Activated naive CD8-positive, alpha-beta T cell treated with anti-CD3 and anti-CD28 coated beads, Interleukin-2, amount 10 ng/mL, durations not matched to agents 7 days and 5 days (primary cell): ENCODE measurements at regions of chr10 and their contacts with region 1.

Region 1: DNA sequence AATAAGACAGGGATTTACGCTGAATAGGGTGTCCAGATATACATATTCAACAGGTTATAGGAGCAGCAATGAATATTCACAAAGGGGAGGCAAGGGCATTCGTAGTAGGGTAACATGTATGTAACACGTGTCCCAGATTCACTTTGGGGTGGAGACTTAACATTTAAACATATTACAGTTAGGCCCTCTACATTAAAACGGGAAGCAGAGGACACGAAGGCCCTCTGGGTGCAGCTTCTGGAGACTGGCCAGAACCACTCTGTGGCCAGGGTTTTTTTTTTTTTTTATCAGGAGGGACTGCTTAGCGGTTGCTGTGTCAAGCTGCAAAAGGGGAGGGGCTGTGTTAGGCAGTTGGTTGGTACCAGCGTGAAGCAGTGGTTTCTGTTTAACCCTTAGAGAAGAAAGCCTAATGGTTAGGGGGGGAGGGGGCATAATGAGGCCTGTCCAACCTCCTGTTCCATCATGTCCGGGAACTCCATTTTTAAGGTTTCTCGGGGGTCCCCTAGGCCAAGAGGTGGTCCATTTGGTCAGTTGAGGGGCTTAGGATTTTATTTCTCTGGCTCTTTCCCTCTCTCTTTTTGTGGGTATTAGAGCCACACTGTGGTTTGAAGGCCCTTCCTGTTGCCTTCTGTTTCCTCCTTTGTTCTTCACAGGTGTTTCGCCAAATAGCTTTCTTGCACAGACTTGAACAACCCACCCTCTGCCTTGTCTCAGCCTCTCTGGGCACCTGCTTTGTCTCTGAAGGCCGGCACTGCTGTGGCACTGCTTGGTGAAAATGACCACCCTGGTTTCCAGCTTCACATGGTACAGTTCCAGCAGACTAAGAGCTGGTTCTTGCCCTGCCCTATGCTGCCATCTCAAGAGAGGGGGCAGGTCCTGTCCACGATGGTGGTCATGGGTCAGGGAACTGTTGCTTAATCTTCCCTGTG is 26.4 kb downstream of the PRF1 start:
- DNase-seq: no peak
- ATAC-seq: peak; percentile 8
- H3K4me3 Mint-ChIP-seq: peak overlapping the region; percentile 69
- H3K27ac Mint-ChIP-seq: peak overlapping the region; percentile 74
- H3K4me1 Mint-ChIP-seq: peaks cover 60% of the 10 kb centered on the region
- H3K27me3 Mint-ChIP-seq: peaks cover 5% of the 10 kb centered on the region

Region 2: DNA sequence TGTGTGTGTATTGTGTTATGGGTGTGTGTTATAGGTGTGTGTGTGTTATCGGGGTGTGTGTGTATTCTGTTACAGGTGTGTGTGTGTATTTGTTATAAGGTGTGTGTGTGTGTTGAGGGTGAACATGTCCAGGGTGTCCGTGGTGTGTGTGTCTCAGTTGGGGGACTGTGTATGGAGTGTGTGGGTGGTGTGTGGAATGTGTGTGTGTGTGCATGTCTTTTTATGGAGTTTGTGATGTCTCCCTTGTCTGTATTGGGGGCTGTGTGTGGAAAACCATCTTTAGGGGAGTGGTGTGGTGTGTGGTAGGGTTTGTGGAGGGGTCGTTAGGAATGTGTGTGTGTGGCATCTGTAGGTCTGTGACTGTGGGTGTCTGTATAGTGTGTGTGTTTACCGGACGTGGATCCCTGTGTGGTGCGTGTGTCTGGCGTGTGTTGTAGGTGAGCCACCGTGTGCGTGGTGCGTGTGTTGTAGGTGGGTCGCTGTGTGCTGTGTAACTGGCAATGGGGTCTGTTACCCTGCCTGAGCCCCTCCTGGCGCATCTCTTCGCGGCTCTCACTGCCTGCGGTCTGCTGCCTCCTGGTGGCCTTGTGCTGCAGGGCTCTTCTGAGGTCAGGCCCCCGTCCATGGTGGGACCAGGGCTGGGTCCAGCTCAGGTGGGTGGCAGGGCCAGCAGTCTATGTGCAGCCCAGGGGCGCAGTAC is 35.9 kb before region 1 on chr10:
- POLR2A ChIA-PET with region 1: no interaction called
- DNase-seq: peak; percentile 52
- ATAC-seq: peak; percentile 41
- H3K4me3 Mint-ChIP-seq: no peak overlapping the region
- H3K27ac Mint-ChIP-seq: peak overlapping the region; percentile 32
- H3K4me1 Mint-ChIP-seq: peaks cover 2% of the 10 kb centered on the region
- H3K27me3 Mint-ChIP-seq: peaks cover 4% of the 10 kb centered on the region

Region 3: DNA sequence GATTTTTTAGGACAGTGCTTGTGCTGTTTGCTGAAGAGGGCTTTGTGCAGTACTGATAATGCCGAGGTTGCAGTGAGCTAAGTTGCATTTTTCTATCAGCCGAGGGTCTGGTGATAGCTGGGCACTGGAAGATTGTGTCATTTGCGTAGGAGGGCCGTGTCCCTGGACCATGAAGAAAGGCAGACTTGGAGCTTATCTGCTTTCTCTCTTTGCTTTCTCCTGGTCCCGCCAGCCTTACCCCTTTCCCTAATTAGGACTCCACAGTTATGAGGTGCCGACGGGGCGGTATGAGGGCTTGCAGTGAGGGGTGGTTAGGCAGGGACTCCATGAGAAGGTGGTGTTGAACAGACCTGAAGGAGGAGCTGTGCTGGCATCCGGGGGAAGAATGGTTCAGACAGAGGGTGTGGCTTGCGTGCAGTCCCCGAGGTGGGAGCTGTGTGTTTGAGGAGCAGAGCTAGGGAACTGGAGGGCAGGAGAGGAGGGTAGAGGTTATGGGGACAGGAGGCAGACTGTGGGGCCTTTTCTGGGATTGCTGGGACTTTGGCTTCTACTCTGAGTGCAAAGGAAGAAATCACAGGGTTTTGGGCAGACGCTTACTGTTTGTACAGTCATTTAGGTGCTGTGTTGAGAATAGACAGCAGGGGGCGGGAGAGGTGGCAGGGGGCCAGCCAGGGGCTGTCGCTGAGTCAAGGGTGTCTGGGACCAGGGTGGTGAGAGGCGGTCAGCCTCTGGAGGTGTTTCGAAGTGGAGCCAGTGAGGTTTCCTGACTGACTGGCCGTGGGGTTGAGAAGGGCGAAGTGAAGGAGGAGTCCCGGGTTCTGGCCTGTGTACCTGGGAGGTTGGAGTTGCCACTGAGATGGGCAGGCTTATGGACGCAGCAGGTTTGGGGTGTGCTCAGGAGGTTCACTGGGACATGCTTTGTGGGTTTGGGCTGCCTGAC is 17.0 kb before region 1 on chr10:
- POLR2A ChIA-PET with region 1: interaction called, 17 read pairs
- DNase-seq: peak; percentile 77
- ATAC-seq: peak; percentile 97
- H3K4me3 Mint-ChIP-seq: peak overlapping the region; percentile 79
- H3K27ac Mint-ChIP-seq: peak overlapping the region; percentile 96
- H3K4me1 Mint-ChIP-seq: peaks cover 36% of the 10 kb centered on the region
- H3K27me3 Mint-ChIP-seq: no peaks in the 10 kb centered on the region

Region 4: GRCh38 chr10:70592746-70593512 is 16.8 kb after region 1 on chr10:
- POLR2A ChIA-PET with region 1: interaction called, 12 read pairs
- DNase-seq: no peak
- ATAC-seq: no peak
- H3K4me3 Mint-ChIP-seq: no peak overlapping the region
- H3K27ac Mint-ChIP-seq: peak overlapping the region; percentile 39
- H3K4me1 Mint-ChIP-seq: peaks cover 53% of the 10 kb centered on the region
- H3K27me3 Mint-ChIP-seq: peaks cover 8% of the 10 kb centered on the region